Caco-2 (cell line): ENCODE measurements at regions of chr20 and their contacts with region 1.

Region 1: GRCh38 chr20:39112178-39112743 is 150.1 kb downstream of the DHX35 start:
- DNase-seq: peak; percentile 78 to 80
- H3K4me3 ChIP-seq: no peak overlapping the region
- H3K4me3 Mint-ChIP-seq: no peak overlapping the region
- H3K27ac Mint-ChIP-seq: peak overlapping the region; percentile 21
- H3K4me1 ChIP-seq: peaks cover 9% of the 10 kb centered on the region; the same call in 1 of the 2 replicates
- H3K4me1 Mint-ChIP-seq: peaks cover 6% of the 10 kb centered on the region
- H3K27me3 ChIP-seq: no peaks in the 10 kb centered on the region; the same call in 1 of the 2 replicates
- H3K27me3 Mint-ChIP-seq: peaks cover 21% of the 10 kb centered on the region
- CTCF ChIP-seq: peak; percentile 91 to 98

Region 2: GRCh38 chr20:39123185-39123557 is 10.9 kb after region 1 on chr20:
- CTCF ChIA-PET with region 1: interaction called, 11 read pairs
- POLR2A ChIA-PET with region 1: no interaction called
- intact Hi-C with region 1: no loop called
- DNase-seq: peak in 1 of 2 experiments; percentile 39
- H3K4me3 ChIP-seq: no peak overlapping the region
- H3K4me3 Mint-ChIP-seq: no peak overlapping the region
- H3K27ac Mint-ChIP-seq: no peak overlapping the region
- H3K4me1 ChIP-seq: peaks cover 9% of the 10 kb centered on the region; the same call in 1 of the 2 replicates
- H3K4me1 Mint-ChIP-seq: no peaks in the 10 kb centered on the region
- H3K27me3 ChIP-seq: no peaks in the 10 kb centered on the region
- H3K27me3 Mint-ChIP-seq: peaks cover 20% of the 10 kb centered on the region
- CTCF ChIP-seq: no peak

Region 3: DNA sequence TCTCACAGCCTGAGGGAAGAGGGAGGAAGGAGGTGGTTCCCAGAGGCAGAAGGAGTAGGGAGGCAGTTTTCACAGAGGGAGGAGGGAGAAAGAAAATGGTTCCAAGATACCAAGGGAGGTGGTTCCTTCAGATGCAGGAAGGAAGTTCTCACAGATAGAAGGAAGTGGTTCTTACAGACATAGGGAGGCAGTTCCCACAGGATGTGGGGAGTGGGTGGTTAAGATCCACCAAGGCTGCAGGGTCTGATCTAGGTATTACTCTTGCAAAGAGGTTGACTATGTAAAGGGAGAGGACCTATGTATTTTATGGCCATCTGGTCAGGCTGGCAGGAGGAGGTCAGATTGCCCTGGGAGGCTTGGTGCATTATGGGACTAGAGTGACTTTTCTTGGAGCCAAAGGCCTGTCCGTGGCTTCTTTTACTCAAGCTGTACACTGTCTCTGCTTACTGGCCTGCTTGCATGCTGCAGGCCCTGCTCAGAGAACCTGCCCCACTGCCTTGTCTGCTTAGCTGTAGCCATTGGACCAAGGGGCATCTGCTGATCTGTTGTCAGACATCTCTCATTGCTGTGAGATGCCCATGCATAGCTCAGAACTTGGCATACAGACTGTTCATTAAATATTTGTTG is 133.5 kb after region 1 on chr20:
- CTCF ChIA-PET with region 1: no interaction called
- POLR2A ChIA-PET with region 1: no interaction called
- intact Hi-C with region 1: no loop called
- DNase-seq: no peak
- H3K4me3 ChIP-seq: no peak overlapping the region
- H3K4me3 Mint-ChIP-seq: no peak overlapping the region
- H3K27ac Mint-ChIP-seq: no peak overlapping the region
- H3K4me1 ChIP-seq: no peaks in the 10 kb centered on the region
- H3K4me1 Mint-ChIP-seq: no peaks in the 10 kb centered on the region
- H3K27me3 ChIP-seq: peaks cover 2% of the 10 kb centered on the region; the same call in 1 of the 2 replicates
- H3K27me3 Mint-ChIP-seq: peaks cover 33% of the 10 kb centered on the region
- CTCF ChIP-seq: no peak

Region 4: GRCh38 chr20:39264506-39265172 is 152.4 kb after region 1 on chr20:
- CTCF ChIA-PET with region 1: interaction called, 15 read pairs
- POLR2A ChIA-PET with region 1: no interaction called
- intact Hi-C with region 1: loop called (anchors 1 kb)
- DNase-seq: peak; percentile 77 to 81
- H3K4me3 ChIP-seq: no peak overlapping the region
- H3K4me3 Mint-ChIP-seq: no peak overlapping the region
- H3K27ac Mint-ChIP-seq: no peak overlapping the region
- H3K4me1 ChIP-seq: no peaks in the 10 kb centered on the region
- H3K4me1 Mint-ChIP-seq: no peaks in the 10 kb centered on the region
- H3K27me3 ChIP-seq: no peaks in the 10 kb centered on the region
- H3K27me3 Mint-ChIP-seq: peaks cover 23% of the 10 kb centered on the region
- CTCF ChIP-seq: peak; percentile 98 to 99

Region 5: GRCh38 chr20:39398656-39399055 is 286.4 kb after region 1 on chr20:
- CTCF ChIA-PET with region 1: interaction called, 6 read pairs
- POLR2A ChIA-PET with region 1: no interaction called
- intact Hi-C with region 1: loop called (anchors 2 kb)
- DNase-seq: peak in 1 of 2 experiments; percentile 24
- H3K4me3 ChIP-seq: no peak overlapping the region
- H3K4me3 Mint-ChIP-seq: no peak overlapping the region
- H3K27ac Mint-ChIP-seq: no peak overlapping the region
- H3K4me1 ChIP-seq: no peaks in the 10 kb centered on the region
- H3K4me1 Mint-ChIP-seq: no peaks in the 10 kb centered on the region
- H3K27me3 ChIP-seq: peaks cover 3% of the 10 kb centered on the region; the same call in 1 of the 2 replicates
- H3K27me3 Mint-ChIP-seq: peaks cover 23% of the 10 kb centered on the region
- CTCF ChIP-seq: peak in 1 of 2 experiments; percentile 41

Region 6: DNA sequence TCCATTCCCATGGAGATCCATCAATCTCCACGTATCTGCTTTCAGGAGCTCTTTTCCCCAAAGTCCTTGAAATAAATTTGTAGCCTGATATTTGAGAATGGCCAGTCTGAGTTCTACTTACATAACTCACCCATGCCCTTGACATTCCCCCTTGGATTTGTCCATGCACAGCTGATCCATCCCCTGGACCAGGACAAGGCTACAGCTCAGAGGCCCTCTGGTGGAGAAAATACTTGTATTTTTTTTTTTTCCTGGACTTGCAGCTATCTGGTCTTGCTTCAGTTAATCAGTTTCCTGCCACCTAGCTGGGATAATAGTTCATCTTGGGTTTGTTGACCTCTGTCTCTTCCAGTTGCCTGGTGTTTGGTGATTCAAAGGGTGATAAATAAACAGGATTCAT is 317.5 kb after region 1 on chr20:
- CTCF ChIA-PET with region 1: interaction called, 15 read pairs
- POLR2A ChIA-PET with region 1: no interaction called
- intact Hi-C with region 1: loop called (anchors 1 kb)
- DNase-seq: peak in 1 of 2 experiments; percentile 54
- H3K4me3 ChIP-seq: no peak overlapping the region
- H3K4me3 Mint-ChIP-seq: no peak overlapping the region
- H3K27ac Mint-ChIP-seq: no peak overlapping the region
- H3K4me1 ChIP-seq: no peaks in the 10 kb centered on the region
- H3K4me1 Mint-ChIP-seq: no peaks in the 10 kb centered on the region
- H3K27me3 ChIP-seq: no peaks in the 10 kb centered on the region
- H3K27me3 Mint-ChIP-seq: no peaks in the 10 kb centered on the region
- CTCF ChIP-seq: peak; percentile 65 to 75

Region 7: DNA sequence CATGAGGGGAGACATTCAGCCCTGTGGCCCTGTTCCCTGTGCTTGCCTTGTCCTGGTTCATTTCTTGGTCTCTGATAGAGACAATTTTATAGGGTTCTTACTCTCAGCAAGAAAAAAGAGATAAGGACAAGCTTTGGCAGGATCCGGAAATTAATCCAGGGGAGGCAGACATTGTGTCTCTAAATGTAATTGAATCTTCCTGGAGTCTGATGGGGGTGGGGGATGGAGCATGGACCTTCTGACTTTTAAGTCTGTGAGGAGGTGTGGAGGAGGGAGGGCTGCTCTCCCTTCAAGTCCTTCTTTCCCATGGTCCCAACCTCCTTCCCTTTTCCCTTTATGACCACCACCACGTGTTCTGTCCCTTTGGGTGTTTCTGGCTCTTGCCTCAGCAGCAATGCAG is 362.6 kb after region 1 on chr20:
- CTCF ChIA-PET with region 1: no interaction called
- POLR2A ChIA-PET with region 1: no interaction called
- intact Hi-C with region 1: no loop called
- DNase-seq: no peak
- H3K4me3 ChIP-seq: no peak overlapping the region
- H3K4me3 Mint-ChIP-seq: no peak overlapping the region
- H3K27ac Mint-ChIP-seq: no peak overlapping the region
- H3K4me1 ChIP-seq: no peaks in the 10 kb centered on the region
- H3K4me1 Mint-ChIP-seq: no peaks in the 10 kb centered on the region
- H3K27me3 ChIP-seq: no peaks in the 10 kb centered on the region
- H3K27me3 Mint-ChIP-seq: peaks cover 4% of the 10 kb centered on the region
- CTCF ChIP-seq: no peak